GM10248 (cell line): ENCODE measurements at regions of chr19 and their contacts with region 1.

Region 1: DNA sequence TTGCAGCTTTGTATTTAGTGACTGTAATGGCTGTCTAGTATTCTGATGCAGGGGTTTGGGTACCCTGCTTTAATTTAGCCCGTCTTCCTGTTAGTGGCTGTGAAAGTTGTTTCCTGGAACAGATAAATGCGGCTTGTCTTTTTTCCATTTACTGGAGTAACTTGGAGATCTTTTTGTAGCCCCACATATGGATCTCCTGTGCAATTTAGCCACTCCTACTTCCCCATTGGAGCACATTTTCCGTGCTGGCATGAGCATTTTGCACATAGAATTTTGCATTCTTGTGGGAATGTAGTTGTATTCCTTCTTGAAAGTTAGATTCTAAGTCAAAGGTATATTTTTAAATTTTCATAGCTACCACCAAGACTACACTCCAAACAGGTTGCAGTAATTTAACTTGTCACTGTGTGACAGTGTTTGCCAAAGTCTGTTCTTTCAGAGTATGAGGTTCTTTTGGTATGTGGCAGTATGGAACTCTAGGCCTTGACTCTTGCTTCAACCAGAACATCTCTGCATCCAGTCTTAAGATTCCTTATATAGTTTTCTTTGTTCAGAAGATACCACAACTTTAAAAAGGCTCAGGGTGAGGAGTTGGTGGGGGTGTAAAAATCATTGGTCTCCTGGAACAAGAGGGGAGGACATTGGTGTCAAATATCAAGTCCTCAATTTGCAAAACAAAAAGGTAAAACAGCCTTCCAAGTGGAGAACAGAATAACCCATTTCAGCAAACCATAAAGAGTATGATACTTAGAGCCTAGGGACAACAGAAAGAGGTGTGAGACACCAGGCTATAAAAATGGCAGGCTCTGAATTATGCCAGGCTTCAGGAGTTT is 21.1 kb upstream of the CCDC97 start:
- DNase-seq: no peak
- CTCF ChIP-seq: no peak

Region 2: DNA sequence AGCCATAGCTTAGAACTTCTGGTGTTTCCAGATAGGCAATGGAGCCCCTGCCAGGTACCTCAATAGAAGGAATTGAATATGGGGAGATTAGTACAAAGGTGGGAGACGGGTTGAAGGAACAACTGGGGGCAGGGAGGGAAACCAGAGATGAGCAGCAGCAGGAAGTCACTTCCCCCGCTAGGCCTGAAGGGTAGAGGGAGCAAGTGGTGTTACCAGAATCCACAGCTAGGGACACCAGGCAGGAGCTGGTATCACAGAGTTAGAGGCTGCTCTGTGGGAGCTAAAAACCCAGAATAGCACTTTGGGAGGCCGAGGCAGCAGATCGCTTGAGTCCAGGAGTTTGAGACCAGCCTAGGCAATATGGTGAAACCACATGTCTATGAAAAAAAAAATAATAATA is 40.0 kb before region 1 on chr19:
- CTCF ChIA-PET with region 1: no interaction called
- POLR2A ChIA-PET with region 1: no interaction called
- DNase-seq: no peak
- CTCF ChIP-seq: no peak

Region 3: DNA sequence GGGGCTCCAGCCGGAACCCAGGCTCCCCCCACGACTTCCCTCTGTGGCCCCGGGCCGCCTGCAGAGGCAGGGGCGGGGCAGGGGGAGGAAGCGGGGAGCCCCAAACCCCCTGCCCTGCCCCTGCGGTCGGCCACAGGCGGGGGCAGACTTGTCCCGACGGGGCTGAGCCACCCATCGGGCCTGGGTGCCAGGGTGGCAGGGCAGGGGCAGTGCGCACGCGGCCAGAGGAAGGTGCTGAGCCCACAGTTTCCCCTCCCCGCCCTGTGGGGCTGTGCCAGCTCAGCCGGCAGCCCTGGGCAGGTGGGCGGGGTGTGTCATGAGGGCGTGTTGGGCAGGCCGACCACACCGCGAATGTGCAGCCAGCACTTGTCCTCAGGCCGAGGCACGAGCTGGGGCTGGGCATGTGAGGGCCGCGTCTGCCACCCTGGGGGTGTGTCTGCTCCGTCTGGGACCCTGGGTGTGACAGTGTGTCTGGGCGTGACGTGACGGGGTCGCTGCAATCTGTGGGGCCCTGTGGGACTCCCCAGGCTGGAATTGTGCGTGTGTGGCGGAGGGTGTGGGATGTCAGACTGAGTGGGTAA is 38.8 kb after region 1 on chr19:
- CTCF ChIA-PET with region 1: no interaction called
- POLR2A ChIA-PET with region 1: interaction called, 14 read pairs
- DNase-seq: peak; percentile 85
- CTCF ChIP-seq: no peak